Activated naive CD8-positive, alpha-beta T cell treated with anti-CD3 and anti-CD28 coated beads, Interleukin-2, amount 10 ng/mL, durations not matched to agents 7 days and 5 days (primary cell): ENCODE measurements at regions of chr6 and their contacts with region 1.

Region 1: DNA sequence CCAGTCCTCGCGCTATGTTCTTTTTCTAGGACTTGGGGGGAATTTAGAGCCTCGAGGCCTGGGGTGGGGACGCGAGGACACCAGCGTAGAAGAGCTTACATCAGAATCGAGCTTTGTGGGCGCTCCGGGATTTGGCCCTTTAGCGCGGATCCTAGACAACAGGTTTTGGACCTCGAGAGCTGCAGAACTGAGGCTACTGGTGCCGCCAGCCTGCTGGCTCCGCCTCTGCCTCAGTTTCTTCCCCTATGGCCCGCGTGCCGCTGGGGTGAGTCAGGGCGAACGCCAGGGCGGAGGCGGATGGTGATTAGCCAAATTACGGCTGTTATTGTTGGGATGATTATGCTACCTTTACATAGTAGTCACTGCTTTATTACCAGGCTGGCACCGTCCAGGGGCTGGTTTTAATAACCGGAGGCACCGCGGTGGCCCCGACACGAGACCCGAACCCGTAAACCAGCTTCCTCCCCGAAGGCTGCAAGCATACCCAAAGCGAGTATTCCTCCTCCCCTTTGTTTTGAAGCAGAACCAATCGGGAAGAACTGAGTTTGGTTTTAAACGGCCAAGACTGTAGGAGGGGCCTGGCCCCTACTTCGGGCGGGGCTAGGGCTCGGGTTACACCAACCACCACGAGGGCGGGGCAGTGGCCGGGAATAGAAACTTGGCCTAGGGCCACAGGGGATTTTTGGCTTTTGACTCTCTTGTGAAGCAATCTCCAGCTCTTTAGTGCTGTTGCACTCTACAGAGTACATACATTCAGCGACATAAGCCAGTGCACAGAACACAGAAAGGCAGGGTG is 639 bp upstream of the GTPBP2 start:
- DNase-seq: peak; percentile 89
- ATAC-seq: peak; percentile 73
- H3K4me3 Mint-ChIP-seq: peak overlapping the region; percentile 100
- H3K27ac Mint-ChIP-seq: peak overlapping the region; percentile 95
- H3K4me1 Mint-ChIP-seq: peaks cover 34% of the 10 kb centered on the region
- H3K27me3 Mint-ChIP-seq: no peaks in the 10 kb centered on the region

Region 2: GRCh38 chr6:41947581-41948220 is 1682.0 kb before region 1 on chr6:
- POLR2A ChIA-PET with region 1: no interaction called
- DNase-seq: no peak
- ATAC-seq: no peak
- H3K4me3 Mint-ChIP-seq: no peak overlapping the region
- H3K27ac Mint-ChIP-seq: peak overlapping the region; percentile 2
- H3K4me1 Mint-ChIP-seq: peaks cover 28% of the 10 kb centered on the region
- H3K27me3 Mint-ChIP-seq: no peaks in the 10 kb centered on the region

Region 3: GRCh38 chr6:43516697-43517504 is 112.8 kb before region 1 on chr6 and contains the starts of genes POLR1C and YIPF3:
- POLR2A ChIA-PET with region 1: interaction called, 11 read pairs
- DNase-seq: peak; percentile 91
- ATAC-seq: peak; percentile 95
- H3K4me3 Mint-ChIP-seq: no peak within 1 kb of the TSS
- H3K27ac Mint-ChIP-seq: no peak within 1 kb of the TSS
- H3K4me1 Mint-ChIP-seq: peaks cover 17% of the 10 kb centered on the region
- H3K27me3 Mint-ChIP-seq: no peaks in the 10 kb centered on the region
- total RNA-seq, gene POLR1C: 28.8 to 29.7 TPM
- total RNA-seq, gene YIPF3: 63.2 to 71.8 TPM

Region 4: GRCh38 chr6:43667245-43668150 is 37.8 kb after region 1 on chr6:
- POLR2A ChIA-PET with region 1: interaction called, 32 read pairs
- DNase-seq: peak; percentile 88
- ATAC-seq: peak; percentile 57
- H3K4me3 Mint-ChIP-seq: peak overlapping the region; percentile 76
- H3K27ac Mint-ChIP-seq: peak overlapping the region; percentile 82
- H3K4me1 Mint-ChIP-seq: peaks cover 41% of the 10 kb centered on the region
- H3K27me3 Mint-ChIP-seq: no peaks in the 10 kb centered on the region

Region 5: DNA sequence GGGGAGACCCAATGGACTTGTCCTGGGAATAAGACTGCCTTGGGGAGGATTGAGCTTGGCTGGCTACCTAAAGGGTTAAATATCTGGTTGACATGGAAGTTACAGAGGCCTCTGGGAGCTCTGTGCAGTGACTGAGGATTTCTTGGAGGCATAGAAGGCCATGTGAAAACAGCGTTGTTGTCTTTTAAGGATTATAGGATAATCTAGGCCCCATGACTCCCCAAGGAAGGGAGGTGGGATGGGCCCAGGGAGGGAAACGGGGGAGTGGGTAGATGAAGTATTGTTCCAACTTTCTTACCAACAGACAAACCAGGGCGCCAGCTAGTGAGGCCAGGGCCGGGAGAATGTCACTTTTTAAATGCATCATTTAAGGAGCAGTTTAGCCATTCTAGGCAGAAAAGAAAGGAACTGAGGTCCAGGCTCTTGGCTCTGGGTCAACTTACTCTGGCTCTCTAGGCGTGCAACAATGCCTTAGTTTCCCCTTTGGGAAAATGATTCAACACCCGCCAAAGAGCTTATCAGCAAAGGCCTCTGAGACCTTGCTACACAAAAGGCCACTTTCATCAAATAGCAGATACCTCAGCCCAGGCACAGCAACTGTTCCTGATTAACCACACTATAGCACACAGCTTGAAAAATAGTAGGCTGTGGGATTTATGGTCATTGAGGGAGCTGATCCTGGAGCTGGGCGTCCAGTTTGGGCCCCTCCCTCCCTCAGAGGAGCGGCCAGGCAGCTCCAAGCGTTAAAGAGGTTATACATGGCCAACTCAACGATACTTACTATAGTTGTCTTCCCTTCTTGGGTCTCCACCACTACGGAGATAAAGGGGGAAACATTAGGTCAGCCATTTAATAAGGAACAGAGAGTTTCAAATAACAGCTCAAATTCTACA is 50.9 kb after region 1 on chr6:
- POLR2A ChIA-PET with region 1: no interaction called
- DNase-seq: no peak
- ATAC-seq: no peak
- H3K4me3 Mint-ChIP-seq: no peak overlapping the region
- H3K27ac Mint-ChIP-seq: no peak overlapping the region
- H3K4me1 Mint-ChIP-seq: peaks cover 19% of the 10 kb centered on the region
- H3K27me3 Mint-ChIP-seq: no peaks in the 10 kb centered on the region